Left ventricle myocardium inferior (tissue), 1 donor: ENCODE measurements at regions of chr2 and their contacts with region 1.

Region 1: GRCh38 chr2:25664183-25664964 is 9.0 kb downstream of the DTNB start:
- DNase-seq: peak; percentile 17
- H3K4me3 ChIP-seq: no peak overlapping the region
- H3K27ac ChIP-seq: no peak overlapping the region
- H3K4me1 ChIP-seq: no peaks in the 10 kb centered on the region
- H3K27me3 ChIP-seq: no peaks in the 10 kb centered on the region
- CTCF ChIP-seq: peak; percentile 77

Region 2: GRCh38 chr2:25606892-25607291 is 57.5 kb before region 1 on chr2:
- intact Hi-C with region 1: loop called (anchors 2 kb)
- DNase-seq: no peak
- H3K4me3 ChIP-seq: no peak overlapping the region
- H3K27ac ChIP-seq: no peak overlapping the region
- H3K4me1 ChIP-seq: peaks cover 4% of the 10 kb centered on the region
- H3K27me3 ChIP-seq: no peaks in the 10 kb centered on the region
- CTCF ChIP-seq: peak; percentile 68